Pancreas (tissue), 10 donors: ENCODE measurements at regions of chr3 and their contacts with region 1.

Region 1: DNA sequence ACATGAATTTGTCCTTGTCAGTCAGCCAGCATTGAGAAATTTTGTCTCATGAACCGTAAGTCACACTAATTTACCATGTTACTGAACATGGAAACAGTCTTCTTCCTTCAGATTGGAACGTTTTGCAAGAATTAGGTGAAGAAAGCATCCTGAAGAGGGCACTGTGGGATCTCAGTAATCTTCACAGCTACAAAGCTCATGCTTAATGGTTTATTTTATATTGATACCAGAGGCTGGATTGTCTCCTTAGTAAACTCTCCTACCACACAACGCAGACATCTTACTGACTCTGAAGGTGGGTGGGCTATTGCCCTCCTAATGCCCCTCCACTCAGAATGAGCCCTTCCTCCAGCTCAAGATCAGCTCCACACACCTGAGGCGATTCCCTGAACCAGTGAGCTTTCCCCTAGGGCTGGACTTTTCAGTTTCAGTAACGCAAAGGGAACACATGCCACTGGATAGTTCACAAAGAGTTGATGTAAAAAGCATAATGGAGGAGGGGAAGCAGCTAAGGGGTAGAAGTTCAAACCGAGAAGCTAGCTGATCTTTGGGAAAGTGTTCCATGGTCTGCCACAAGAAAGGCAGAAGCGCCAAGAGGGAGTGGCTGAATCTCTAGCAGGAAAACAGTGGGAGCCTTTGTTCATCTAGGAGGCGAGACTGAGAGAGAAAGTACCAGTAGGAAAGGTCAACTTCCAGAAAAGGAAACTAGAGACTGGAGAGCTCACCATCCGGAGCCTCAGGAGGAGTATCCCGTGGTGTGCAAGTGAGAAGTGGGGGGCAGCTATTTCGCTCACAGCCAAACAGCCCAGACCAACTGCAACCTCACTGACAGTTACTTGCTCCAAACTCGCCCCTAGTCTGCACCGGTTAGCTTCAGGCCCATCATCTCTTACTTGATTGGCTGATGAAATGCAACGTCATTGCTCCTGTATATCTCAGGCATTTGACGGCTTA is at the start of gene SLC9C1:
- DNase-seq: peak in 3 of 6 donors; percentile 25 to 47 (median 31)
- ATAC-seq: peak; percentile 83 to 95 (median 94)
- H3K4me3 ChIP-seq: peak within 1 kb of the TSS in 3 of 4 donors; percentile 8 to 29 (median 28)
- H3K27ac ChIP-seq: peak within 1 kb of the TSS in 3 of 4 donors; percentile 16 to 67 (median 38)
- H3K4me1 ChIP-seq: no peaks in the 10 kb centered on the region
- H3K27me3 ChIP-seq: no peaks in the 10 kb centered on the region
- CTCF ChIP-seq: peak in 3 of 4 donors; percentile 33 to 38 (median 36)
- total RNA-seq, gene SLC9C1: 0.66 TPM in 1 of 6 donors, not detected in the others

Region 2: GRCh38 chr3:112350181-112350825 is 56.7 kb after region 1 on chr3:
- intact Hi-C with region 1: no loop called
- DNase-seq: no peak
- ATAC-seq: no peak
- H3K4me3 ChIP-seq: no peak overlapping the region
- H3K27ac ChIP-seq: no peak overlapping the region
- H3K4me1 ChIP-seq: no peaks in the 10 kb centered on the region
- H3K27me3 ChIP-seq: no peaks in the 10 kb centered on the region
- CTCF ChIP-seq: no peak

Region 3: GRCh38 chr3:112519424-112520001 is 225.9 kb after region 1 on chr3:
- intact Hi-C with region 1: loop called in 2 of 3 experiments (anchors 10 kb)
- DNase-seq: peak in 1 of 6 donors; percentile 15
- ATAC-seq: peak; percentile 72 to 93 (median 90)
- H3K4me3 ChIP-seq: no peak overlapping the region
- H3K27ac ChIP-seq: no peak overlapping the region
- H3K4me1 ChIP-seq: no peaks in the 10 kb centered on the region
- H3K27me3 ChIP-seq: no peaks in the 10 kb centered on the region
- CTCF ChIP-seq: peak; percentile 34 to 63 (median 52)

Region 4: DNA sequence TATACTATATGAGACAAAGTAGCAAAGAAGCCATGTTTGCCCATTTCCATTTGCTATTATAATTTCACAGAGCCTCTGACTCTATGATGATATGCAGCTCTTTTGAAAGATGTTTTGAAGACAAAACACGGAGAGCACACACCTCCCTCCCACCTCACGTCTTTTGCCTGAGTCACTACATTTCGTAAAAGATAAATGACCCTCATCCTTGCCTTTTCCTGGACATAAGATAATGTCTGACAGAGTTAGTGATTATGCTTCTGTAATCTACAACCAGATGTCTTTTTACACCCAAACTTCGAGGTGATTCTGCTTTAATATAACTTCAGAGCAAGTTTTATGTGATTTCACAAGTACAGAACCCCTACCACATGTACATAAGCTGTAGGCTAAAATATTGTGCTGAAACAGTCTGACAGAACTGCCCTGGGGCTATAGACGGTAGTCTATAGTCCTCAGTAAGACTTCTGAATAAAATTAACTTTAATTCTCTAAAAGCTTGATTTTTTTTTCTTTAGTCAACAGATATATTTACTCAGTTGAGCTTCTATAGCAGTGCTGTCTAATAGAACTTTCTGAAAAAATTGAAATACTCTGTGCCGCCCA is 453.1 kb after region 1 on chr3:
- intact Hi-C with region 1: no loop called
- DNase-seq: no peak
- ATAC-seq: no peak
- H3K4me3 ChIP-seq: no peak overlapping the region
- H3K27ac ChIP-seq: no peak overlapping the region
- H3K4me1 ChIP-seq: no peaks in the 10 kb centered on the region
- H3K27me3 ChIP-seq: no peaks in the 10 kb centered on the region
- CTCF ChIP-seq: no peak